WTC11 (cell line): ENCODE measurements at regions of chr19 and their contacts with region 1.

Region 1: DNA sequence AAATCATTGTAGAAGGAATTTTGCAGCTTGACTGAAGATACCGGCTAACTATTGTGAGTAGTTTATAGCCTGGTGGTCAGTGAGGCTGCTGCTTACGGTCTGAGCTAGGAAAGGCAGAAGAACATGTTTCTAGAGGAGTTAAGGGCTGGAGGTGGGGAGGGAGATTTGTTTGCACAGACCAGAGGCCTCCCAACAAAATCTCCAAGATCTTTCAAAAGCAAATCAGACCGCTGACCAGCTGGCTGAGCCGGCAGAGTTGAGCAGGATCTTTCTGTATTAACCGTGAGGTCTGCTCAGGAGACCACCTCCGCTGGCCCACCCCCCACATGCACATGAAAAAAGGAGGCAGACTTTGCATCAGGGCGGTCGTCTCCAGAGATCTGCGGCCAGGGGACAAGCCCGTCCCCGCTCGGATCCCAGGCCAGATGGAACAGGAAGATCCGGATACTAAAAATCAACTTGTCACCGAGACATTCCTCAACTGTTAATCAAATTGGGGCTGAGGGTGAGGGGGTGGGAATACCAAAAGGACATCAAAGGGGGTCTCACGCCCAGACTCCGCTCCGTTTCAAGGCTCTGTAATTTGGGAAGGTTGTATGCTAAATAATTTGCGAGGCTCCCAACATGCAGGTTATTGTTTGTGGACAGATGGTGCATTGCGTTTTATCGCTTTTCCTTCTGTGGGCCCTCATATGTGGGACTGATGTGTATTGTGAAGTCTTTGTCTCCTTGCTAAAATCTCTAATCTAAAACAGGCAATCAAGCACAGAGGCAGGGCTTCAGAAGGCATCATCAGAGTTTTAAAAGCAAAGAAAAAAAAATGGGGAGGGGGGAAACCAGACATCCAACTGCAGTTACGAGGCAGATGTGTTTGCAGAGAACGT is 319.0 kb downstream of the ZNF536 start:
- DNase-seq: peak; percentile 38
- ATAC-seq: peak; percentile 42
- H3K4me3 Mint-ChIP-seq: peak overlapping the region; percentile 45
- H3K27ac Mint-ChIP-seq: peak overlapping the region; percentile 92
- H3K4me1 Mint-ChIP-seq: peaks cover 86% of the 10 kb centered on the region
- H3K27me3 Mint-ChIP-seq: no peaks in the 10 kb centered on the region
- CTCF ChIP-seq: no peak

Region 2: GRCh38 chr19:30784850-30785457 is 93.8 kb after region 1 on chr19:
- CTCF ChIA-PET with region 1: interaction called, 13 read pairs
- POLR2A ChIA-PET with region 1: no interaction called
- DNase-seq: peak; percentile 84
- ATAC-seq: peak; percentile 97
- H3K4me3 Mint-ChIP-seq: no peak overlapping the region
- H3K27ac Mint-ChIP-seq: no peak overlapping the region
- H3K4me1 Mint-ChIP-seq: no peaks in the 10 kb centered on the region
- H3K27me3 Mint-ChIP-seq: no peaks in the 10 kb centered on the region; the same call in 1 of the 2 replicates
- CTCF ChIP-seq: peak; percentile 63